Breast epithelium (tissue), 4 donors: ENCODE measurements at regions of chr1 and their contacts with region 1.

Region 1: GRCh38 chr1:215151841-215152549 is 69.5 kb downstream of the KCNK2 start:
- DNase-seq: no peak
- H3K4me3 ChIP-seq: no peak overlapping the region
- H3K27ac ChIP-seq: no peak overlapping the region
- H3K4me1 ChIP-seq: no peaks in the 10 kb centered on the region
- H3K27me3 ChIP-seq: no peaks in the 10 kb centered on the region
- CTCF ChIP-seq: no peak
- POLR2A ChIP-seq: no peak

Region 2: DNA sequence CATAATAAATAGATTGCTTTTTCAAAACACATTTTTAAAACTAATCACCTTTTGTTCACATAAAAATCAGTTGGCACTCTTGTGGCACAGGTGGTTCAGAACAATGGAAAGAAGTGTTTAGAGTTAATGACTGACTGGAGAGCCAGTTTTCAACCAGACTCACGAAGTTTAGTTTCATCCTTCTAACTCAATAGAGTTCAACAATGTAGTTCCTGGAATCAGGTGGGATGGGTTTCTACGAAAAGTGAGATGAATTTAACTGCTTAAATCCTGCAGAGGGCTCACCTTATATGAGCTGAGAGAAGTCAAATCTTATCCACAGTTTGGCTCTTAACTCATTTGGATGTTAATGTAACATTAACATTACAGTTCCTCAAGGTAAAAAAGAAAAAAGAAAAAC is 754.5 kb before region 1 on chr1:
- intact Hi-C with region 1: no loop called
- DNase-seq: no peak
- H3K4me3 ChIP-seq: no peak overlapping the region
- H3K27ac ChIP-seq: no peak overlapping the region
- H3K4me1 ChIP-seq: no peaks in the 10 kb centered on the region
- H3K27me3 ChIP-seq: no peaks in the 10 kb centered on the region
- CTCF ChIP-seq: no peak
- POLR2A ChIP-seq: no peak

Region 3: GRCh38 chr1:215226757-215227156 is 74.8 kb after region 1 on chr1:
- intact Hi-C with region 1: loop called (anchors 2 kb)
- DNase-seq: no peak
- H3K4me3 ChIP-seq: no peak overlapping the region
- H3K27ac ChIP-seq: no peak overlapping the region
- H3K4me1 ChIP-seq: no peaks in the 10 kb centered on the region
- H3K27me3 ChIP-seq: no peaks in the 10 kb centered on the region
- CTCF ChIP-seq: no peak
- POLR2A ChIP-seq: no peak